ENCODE measurements at regions of chr3 and their contacts with region 1.

Region 1: DNA sequence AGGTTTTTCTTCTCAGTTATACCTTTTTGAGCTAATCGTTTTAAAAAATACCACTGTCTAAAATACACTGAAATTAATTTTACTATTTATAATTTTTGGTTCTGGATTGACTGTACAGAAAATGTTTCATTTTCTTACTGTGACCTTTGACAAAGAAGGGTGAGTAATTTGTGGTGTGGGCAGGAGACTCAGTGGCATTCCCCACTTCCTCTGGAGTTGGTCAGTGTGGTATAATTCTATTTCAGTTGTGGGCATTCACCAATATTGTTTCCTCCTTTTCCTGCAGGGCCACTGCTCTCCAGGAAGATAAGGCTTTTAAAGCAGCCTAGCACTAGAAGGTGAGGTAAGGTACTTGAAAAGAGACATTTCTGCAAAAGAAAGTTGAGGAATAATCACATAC is 6.5 kb downstream of the DAG1 start:
- DNase-seq: no peak
- ATAC-seq: no peak
- H3K4me3 ChIP-seq: no peak overlapping the region
- H3K27ac ChIP-seq: no peak overlapping the region
- H3K4me1 ChIP-seq: peaks cover 3% of the 10 kb centered on the region; the same call in 1 of the 2 replicates
- H3K27me3 ChIP-seq: no peaks in the 10 kb centered on the region
- CTCF ChIP-seq: no peak

Region 2: GRCh38 chr3:49454458-49454857 is 22.1 kb before region 1 on chr3:
- CTCF ChIA-PET with region 1: interaction called, 10 read pairs
- POLR2A ChIA-PET with region 1: no interaction called
- in situ Hi-C with region 1: no loop called
- intact Hi-C with region 1: no loop called
- DNase-seq: no peak
- ATAC-seq: peak; percentile 72
- H3K4me3 ChIP-seq: no peak overlapping the region
- H3K27ac ChIP-seq: no peak overlapping the region
- H3K4me1 ChIP-seq: peaks cover 3% of the 10 kb centered on the region; the same call in 1 of the 2 replicates
- H3K27me3 ChIP-seq: no peaks in the 10 kb centered on the region
- CTCF ChIP-seq: no peak; the same call in 1 of the 2 replicates

Region 3: DNA sequence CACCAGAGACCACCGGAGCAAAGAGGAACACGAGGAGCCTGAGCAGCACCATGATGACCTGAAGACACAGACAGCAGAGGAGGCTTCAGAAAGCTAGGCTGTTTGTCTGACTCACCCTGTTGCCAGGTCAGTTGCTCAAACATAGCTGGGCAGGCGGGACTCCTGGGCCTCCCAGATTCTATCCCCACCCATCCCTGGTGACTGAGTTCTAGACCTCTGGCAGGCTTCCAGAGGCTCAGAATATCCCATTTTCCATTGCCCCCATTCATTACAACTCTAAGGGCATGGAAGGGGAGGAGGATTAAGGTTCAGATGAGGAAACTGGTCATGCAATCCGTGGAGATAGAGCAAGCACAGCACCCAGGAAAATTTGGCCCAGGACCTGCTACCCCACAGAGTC is 323.2 kb after region 1 on chr3 and contains the start of gene CDHR4:
- CTCF ChIA-PET with region 1: no interaction called
- POLR2A ChIA-PET with region 1: no interaction called
- in situ Hi-C with region 1: no loop called
- intact Hi-C with region 1: no loop called
- DNase-seq: no peak
- ATAC-seq: no peak
- H3K4me3 ChIP-seq: no peak within 1 kb of the TSS
- H3K27ac ChIP-seq: no peak within 1 kb of the TSS
- H3K4me1 ChIP-seq: no peaks in the 10 kb centered on the region
- H3K27me3 ChIP-seq: no peaks in the 10 kb centered on the region
- CTCF ChIP-seq: no peak
- total RNA-seq, gene CDHR4: not detected

Measured in Panc1 (cell line).